Activated B cell treated with CpG ODN at 0.5 μM for 24 hours (primary cell): ENCODE measurements at regions of chr14 and their contacts with region 1.

Region 1: GRCh38 chr14:73026845-73027542 is at the start of gene ZFYVE1:
- DNase-seq: peak; percentile 76
- ATAC-seq: peak; percentile 99
- H3K4me3 Mint-ChIP-seq: peak within 1 kb of the TSS; percentile 98
- H3K27ac Mint-ChIP-seq: peak within 1 kb of the TSS; percentile 88
- H3K4me1 Mint-ChIP-seq: peaks cover 42% of the 10 kb centered on the region
- H3K27me3 Mint-ChIP-seq: no peaks in the 10 kb centered on the region
- CTCF ChIP-seq: no peak
- total RNA-seq, gene ZFYVE1: 12.7 and 16.5 TPM in 2 replicates

Region 2: DNA sequence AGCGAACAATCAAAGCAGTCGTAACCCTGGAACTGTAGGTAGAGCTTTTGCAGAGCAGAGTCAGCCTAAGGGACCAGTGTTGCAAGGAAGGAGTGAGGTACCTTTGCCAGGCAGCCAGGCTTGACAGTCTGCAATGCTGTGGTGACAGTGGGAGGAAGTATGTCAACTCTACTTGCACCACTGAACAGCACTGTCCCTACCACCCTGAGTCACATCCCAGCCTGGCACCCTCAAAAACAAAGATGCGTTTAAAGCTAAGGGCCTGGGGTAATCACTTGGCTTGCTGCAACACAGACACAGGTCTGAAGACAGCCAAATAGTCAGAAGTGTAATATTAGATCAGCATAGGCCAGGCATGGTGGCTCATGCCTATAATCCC is 275.0 kb before region 1 on chr14:
- CTCF ChIA-PET with region 1: no interaction called
- POLR2A ChIA-PET with region 1: no interaction called
- intact Hi-C with region 1: no loop called
- DNase-seq: no peak
- ATAC-seq: peak; percentile 99
- H3K4me3 Mint-ChIP-seq: no peak overlapping the region
- H3K27ac Mint-ChIP-seq: no peak overlapping the region
- H3K4me1 Mint-ChIP-seq: peaks cover 19% of the 10 kb centered on the region
- H3K27me3 Mint-ChIP-seq: no peaks in the 10 kb centered on the region
- CTCF ChIP-seq: no peak

Region 3: GRCh38 chr14:73058224-73058921 is 31.4 kb after region 1 on chr14 and contains the start of gene RBM25:
- CTCF ChIA-PET with region 1: interaction called, 3 read pairs
- POLR2A ChIA-PET with region 1: interaction called, 64 read pairs
- intact Hi-C with region 1: loop called (anchors 1 kb)
- DNase-seq: peak; percentile 90
- ATAC-seq: peak; percentile 93
- H3K4me3 Mint-ChIP-seq: no peak within 1 kb of the TSS
- H3K27ac Mint-ChIP-seq: no peak within 1 kb of the TSS
- H3K4me1 Mint-ChIP-seq: peaks cover 42% of the 10 kb centered on the region
- H3K27me3 Mint-ChIP-seq: no peaks in the 10 kb centered on the region
- CTCF ChIP-seq: no peak
- total RNA-seq, gene RBM25: 114 and 123 TPM in 2 replicates

Region 4: DNA sequence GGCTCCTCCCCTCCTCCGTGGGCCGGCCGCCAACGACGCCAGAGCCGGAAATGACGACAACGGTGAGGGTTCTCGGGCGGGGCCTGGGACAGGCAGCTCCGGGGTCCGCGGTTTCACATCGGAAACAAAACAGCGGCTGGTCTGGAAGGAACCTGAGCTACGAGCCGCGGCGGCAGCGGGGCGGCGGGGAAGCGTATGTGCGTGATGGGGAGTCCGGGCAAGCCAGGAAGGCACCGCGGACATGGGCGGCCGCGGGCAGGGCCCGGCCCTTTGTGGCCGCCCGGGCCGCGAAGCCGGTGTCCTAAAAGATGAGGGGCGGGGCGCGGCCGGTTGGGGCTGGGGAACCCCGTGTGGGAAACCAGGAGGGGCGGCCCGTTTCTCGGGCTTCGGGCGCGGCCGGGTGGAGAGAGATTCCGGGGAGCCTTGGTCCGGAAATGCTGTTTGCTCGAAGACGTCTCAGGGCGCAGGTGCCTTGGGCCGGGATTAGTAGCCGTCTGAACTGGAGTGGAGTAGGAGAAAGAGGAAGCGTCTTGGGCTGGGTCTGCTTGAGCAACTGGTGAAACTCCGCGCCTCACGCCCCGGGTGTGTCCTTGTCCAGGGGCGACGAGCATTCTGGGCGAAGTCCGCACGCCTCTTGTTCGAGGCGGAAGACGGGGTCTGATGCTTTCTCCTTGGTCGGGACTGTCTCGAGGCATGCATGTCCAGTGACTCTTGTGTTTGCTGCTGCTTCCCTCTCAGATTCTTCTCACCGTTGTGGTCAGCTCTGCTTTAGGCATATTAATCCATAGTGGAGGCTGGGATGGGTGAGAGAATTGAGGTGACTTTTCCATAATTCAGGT is 109.6 kb after region 1 on chr14 and contains the start of gene PSEN1:
- CTCF ChIA-PET with region 1: no interaction called
- POLR2A ChIA-PET with region 1: interaction called, 5 read pairs
- intact Hi-C with region 1: loop called (anchors 1 kb)
- DNase-seq: peak; percentile 99
- ATAC-seq: peak; percentile 92
- H3K4me3 Mint-ChIP-seq: peak within 1 kb of the TSS; percentile 95
- H3K27ac Mint-ChIP-seq: peak within 1 kb of the TSS; percentile 98
- H3K4me1 Mint-ChIP-seq: peaks cover 33% of the 10 kb centered on the region
- H3K27me3 Mint-ChIP-seq: no peaks in the 10 kb centered on the region
- CTCF ChIP-seq: no peak
- total RNA-seq, gene PSEN1: 38.6 and 42.9 TPM in 2 replicates